ENCODE measurements at regions of chr5 and their contacts with region 1.

Region 1: GRCh38 chr5:5141625-5142532 is 1.7 kb downstream of the ADAMTS16 start:
- H3K4me3 ChIP-seq: peak overlapping the region; percentile 77
- H3K27ac ChIP-seq: no peak overlapping the region
- H3K4me1 ChIP-seq: no peaks in the 10 kb centered on the region; the same call in 1 of the 2 replicates
- CTCF ChIP-seq: no peak

Region 2: GRCh38 chr5:5126444-5126843 is 15.4 kb before region 1 on chr5:
- CTCF ChIA-PET with region 1: no interaction called
- POLR2A ChIA-PET with region 1: no interaction called
- H3K4me3 ChIP-seq: no peak overlapping the region
- H3K27ac ChIP-seq: no peak overlapping the region
- H3K4me1 ChIP-seq: 0 out of 2 replicates have a peak, but pooled peaks cover 4% of the 10 kb centered on the region
- CTCF ChIP-seq: no peak

Region 3: DNA sequence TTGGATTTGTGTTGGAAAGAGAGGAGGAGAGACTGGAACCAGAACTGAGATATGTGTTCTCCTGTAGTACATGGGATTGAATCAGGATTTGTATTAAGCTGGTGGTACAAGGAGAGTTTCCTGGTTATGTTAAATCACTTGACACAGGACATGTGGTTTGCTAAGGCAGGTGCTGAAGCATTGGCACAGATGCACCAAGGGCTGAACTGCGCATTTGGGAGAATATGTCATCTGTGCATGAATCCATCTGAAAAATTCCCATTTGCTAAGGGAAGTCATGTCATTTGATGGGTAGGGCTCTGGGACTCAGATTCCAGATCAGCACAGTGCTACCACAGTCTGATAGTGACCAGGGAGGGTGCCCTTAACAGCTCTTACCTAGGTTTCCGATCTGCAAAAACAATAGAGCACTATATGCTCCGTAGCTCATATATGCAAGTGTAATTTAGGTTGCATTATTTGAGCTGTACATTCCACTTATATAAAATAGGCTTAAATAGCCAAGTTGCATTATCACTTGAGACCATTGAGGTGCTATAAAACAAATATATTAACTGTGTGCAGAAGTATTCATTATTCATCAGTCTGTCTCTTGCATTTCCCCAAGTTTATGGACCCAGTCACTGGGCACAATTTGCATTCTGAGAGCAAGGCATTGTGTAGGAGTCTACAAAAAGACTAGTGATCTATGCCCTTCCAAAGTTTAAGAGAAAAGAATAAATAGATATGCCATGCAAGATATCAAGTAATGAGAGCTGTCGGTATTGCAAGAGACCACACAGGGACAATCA is 53.4 kb after region 1 on chr5:
- CTCF ChIA-PET with region 1: no interaction called
- POLR2A ChIA-PET with region 1: no interaction called
- H3K4me3 ChIP-seq: no peak overlapping the region
- H3K27ac ChIP-seq: no peak overlapping the region
- H3K4me1 ChIP-seq: no peaks in the 10 kb centered on the region
- CTCF ChIP-seq: no peak

Region 4: DNA sequence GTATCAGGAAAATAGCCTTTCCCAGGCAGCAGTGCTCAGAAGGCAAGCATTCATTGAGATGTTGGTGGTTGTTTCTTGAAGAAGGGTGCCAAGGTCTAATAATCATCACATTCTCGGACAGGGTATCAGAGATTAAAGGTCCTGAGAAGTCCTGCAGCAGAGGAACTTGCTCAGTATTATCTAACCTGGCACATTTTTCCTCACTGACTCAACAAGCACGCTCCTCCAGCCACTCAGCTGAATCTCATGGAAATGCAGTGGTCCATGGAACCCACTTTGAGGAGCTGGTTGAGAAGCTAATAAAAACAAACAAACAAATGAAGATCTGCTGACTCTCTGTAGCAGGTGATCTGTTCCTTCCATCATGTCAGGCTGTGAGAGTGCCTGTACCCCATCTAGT is 245.3 kb after region 1 on chr5:
- CTCF ChIA-PET with region 1: interaction called, 12 read pairs
- POLR2A ChIA-PET with region 1: no interaction called
- H3K4me3 ChIP-seq: no peak overlapping the region
- H3K27ac ChIP-seq: no peak overlapping the region
- H3K4me1 ChIP-seq: peaks cover 11% of the 10 kb centered on the region
- CTCF ChIP-seq: no peak

Region 5: GRCh38 chr5:5398046-5398445 is 256.2 kb after region 1 on chr5:
- CTCF ChIA-PET with region 1: interaction called, 24 read pairs
- POLR2A ChIA-PET with region 1: no interaction called
- H3K4me3 ChIP-seq: no peak overlapping the region
- H3K27ac ChIP-seq: no peak overlapping the region
- H3K4me1 ChIP-seq: no peaks in the 10 kb centered on the region
- CTCF ChIP-seq: no peak